Cardiac septum (tissue), 1 donor: ENCODE measurements at regions of chr11 and their contacts with region 1.

Region 1: DNA sequence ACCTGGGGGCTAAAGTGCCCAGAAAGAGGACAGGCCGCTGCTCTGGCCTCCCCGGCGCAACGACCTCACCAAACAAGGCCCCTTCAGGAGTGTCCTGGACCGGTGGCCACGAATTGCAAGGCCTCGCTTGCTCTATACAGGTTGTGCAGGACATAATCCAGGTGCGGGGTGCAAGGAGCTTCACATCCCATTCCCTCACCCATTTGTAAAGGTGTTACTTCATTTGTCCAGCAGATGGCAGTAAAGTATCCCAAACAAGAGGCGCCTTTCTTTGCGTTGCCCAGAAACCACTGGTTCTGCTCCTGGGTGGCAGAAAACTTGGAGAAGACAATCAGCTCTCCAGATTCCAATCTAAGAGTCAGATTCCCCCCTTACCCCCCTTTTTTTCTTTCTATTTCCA is 35.9 kb upstream of the PRDM11 start:
- DNase-seq: no peak

Region 2: GRCh38 chr11:45289369-45289768 is 178.8 kb after region 1 on chr11:
- intact Hi-C with region 1: loop called (anchors 1 kb)
- DNase-seq: no peak